Caco-2 (cell line): ENCODE measurements at regions of chr17 and their contacts with region 1.

Region 1: DNA sequence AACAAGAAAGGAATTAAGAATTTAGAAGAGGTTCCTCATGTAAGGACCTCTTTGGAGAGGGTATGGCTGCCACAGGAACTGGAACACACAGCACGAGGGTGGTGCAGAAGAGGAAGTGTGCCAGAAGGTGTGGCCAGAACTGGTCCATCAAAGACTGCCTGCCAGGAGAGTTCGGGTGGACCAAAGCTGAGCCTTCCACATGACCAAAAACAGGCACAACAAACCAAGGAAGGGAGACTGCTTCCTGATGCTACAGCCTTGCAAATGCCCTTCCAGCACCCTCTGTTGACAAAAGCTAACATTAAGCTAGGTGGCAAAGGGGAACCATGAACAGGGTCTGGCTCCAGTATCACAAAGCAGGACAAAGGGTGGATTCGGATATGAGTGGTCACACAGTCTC is 125.8 kb upstream of the TMEM97 start:
- DNase-seq: no peak
- H3K4me3 ChIP-seq: no peak overlapping the region
- H3K4me3 Mint-ChIP-seq: no peak overlapping the region
- H3K27ac Mint-ChIP-seq: no peak overlapping the region
- H3K4me1 ChIP-seq: peaks cover 20% of the 10 kb centered on the region
- H3K4me1 Mint-ChIP-seq: peaks cover 17% of the 10 kb centered on the region
- H3K27me3 ChIP-seq: no peaks in the 10 kb centered on the region
- H3K27me3 Mint-ChIP-seq: no peaks in the 10 kb centered on the region
- CTCF ChIP-seq: no peak

Region 2: GRCh38 chr17:28173801-28174200 is 19.4 kb before region 1 on chr17:
- CTCF ChIA-PET with region 1: no interaction called
- POLR2A ChIA-PET with region 1: no interaction called
- intact Hi-C with region 1: loop called (anchors 1 kb)
- DNase-seq: no peak
- H3K4me3 ChIP-seq: no peak overlapping the region
- H3K4me3 Mint-ChIP-seq: no peak overlapping the region
- H3K27ac Mint-ChIP-seq: peak overlapping the region; percentile 4
- H3K4me1 ChIP-seq: peaks cover 30% of the 10 kb centered on the region
- H3K4me1 Mint-ChIP-seq: peaks cover 33% of the 10 kb centered on the region
- H3K27me3 ChIP-seq: no peaks in the 10 kb centered on the region
- H3K27me3 Mint-ChIP-seq: no peaks in the 10 kb centered on the region
- CTCF ChIP-seq: no peak

Region 3: DNA sequence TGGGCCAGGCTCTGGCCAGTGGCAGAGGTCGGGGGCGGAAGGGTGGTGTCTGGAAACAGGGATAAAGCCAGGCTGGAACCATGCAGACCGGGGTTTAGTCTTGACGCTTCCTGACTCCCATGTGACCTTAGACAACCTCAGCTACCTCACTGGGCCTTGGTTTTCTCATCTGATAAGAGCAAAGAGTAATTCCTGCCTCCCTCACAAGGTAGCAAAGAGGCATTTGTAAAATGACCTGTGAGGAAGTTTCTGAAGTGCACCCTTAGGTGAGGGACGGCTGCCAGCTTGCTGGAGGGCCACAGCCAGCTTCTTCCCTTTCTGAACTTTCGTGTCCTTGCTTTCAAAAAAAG is 47.7 kb after region 1 on chr17:
- CTCF ChIA-PET with region 1: no interaction called
- POLR2A ChIA-PET with region 1: no interaction called
- intact Hi-C with region 1: loop called (anchors 5 kb)
- DNase-seq: no peak
- H3K4me3 ChIP-seq: no peak overlapping the region
- H3K4me3 Mint-ChIP-seq: no peak overlapping the region
- H3K27ac Mint-ChIP-seq: no peak overlapping the region
- H3K4me1 ChIP-seq: peaks cover 20% of the 10 kb centered on the region
- H3K4me1 Mint-ChIP-seq: peaks cover 10% of the 10 kb centered on the region
- H3K27me3 ChIP-seq: no peaks in the 10 kb centered on the region
- H3K27me3 Mint-ChIP-seq: no peaks in the 10 kb centered on the region
- CTCF ChIP-seq: no peak